Heart left ventricle (tissue), 16 donors: ENCODE measurements at regions of chr15 and their contacts with region 1.

Region 1: GRCh38 chr15:57720867-57721266 is 14.4 kb downstream of the POLR2M start:
- DNase-seq: no peak
- ATAC-seq: no peak
- H3K4me3 ChIP-seq: no peak overlapping the region
- H3K27ac ChIP-seq: no peak overlapping the region
- H3K4me1 ChIP-seq: peaks cover 0 to 11% (median 0%) of the 10 kb centered on the region in 12 donors
- H3K27me3 ChIP-seq: no peaks in the 10 kb centered on the region
- CTCF ChIP-seq: no peak
- POLR2A ChIP-seq: no peak

Region 2: GRCh38 chr15:57675481-57676181 is 45.2 kb before region 1 on chr15:
- intact Hi-C with region 1: loop called in 2 of 10 experiments (anchors 2 to 10 kb)
- DNase-seq: no peak
- ATAC-seq: peak in 1 of 4 donors; percentile 27
- H3K4me3 ChIP-seq: no peak overlapping the region
- H3K27ac ChIP-seq: peak overlapping the region in 1 of 12 donors; percentile 38
- H3K4me1 ChIP-seq: peaks cover 0 to 75% (median 22%) of the 10 kb centered on the region in 12 donors
- H3K27me3 ChIP-seq: no peaks in the 10 kb centered on the region
- CTCF ChIP-seq: no peak
- POLR2A ChIP-seq: no peak